Dorsolateral prefrontal cortex (tissue), 120 donors: ENCODE measurements at regions of chr15 and their contacts with region 1.

Region 1: DNA sequence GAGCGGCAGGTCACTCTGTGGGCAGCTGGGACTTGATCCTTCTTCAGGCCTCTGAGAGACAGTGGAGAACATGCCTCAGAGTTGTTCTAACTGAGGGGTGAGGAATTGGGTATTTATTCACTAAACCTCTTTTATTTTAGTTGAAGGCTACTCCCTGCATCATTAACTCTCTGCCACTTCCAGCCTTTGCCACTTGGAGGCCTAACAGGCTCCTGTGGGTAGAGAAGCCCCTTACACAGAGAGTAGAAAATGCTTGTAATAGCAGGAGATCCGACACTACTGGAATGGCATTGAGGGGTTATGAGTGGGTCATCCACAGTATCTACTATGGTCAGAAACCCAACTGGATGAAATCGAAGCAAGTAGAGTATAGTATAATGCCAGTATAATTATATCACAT is 81.7 kb downstream of the RYR3 start:
- DNase-seq: no peak
- H3K4me3 ChIP-seq: no peak overlapping the region
- H3K27ac ChIP-seq: no peak overlapping the region
- H3K27me3 ChIP-seq: no peaks in the 10 kb centered on the region
- CTCF ChIP-seq: no peak

Region 2: DNA sequence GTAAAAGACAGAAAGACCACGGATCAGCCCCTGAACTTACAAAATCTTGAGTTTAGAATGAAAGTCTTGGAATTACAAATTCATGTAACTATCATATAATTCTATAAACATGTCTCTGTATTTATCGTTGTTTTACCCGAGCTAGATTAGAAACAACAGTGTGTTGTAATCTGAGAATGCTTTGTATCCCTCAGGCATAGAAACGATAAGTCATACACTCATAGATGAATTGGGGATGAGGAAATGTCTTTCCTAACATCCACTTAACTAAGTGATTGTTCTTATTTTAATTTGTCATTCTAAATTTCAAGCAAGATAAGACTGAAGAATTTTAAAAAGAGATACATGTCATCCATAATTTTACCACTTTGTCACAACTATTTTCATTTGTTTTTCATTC is 83.6 kb after region 1 on chr15:
- intact Hi-C with region 1: loop called in 1 of 2 experiments (anchors 10 kb)
- DNase-seq: no peak
- H3K4me3 ChIP-seq: no peak overlapping the region
- H3K27ac ChIP-seq: no peak overlapping the region
- H3K27me3 ChIP-seq: no peaks in the 10 kb centered on the region
- CTCF ChIP-seq: no peak

Region 3: GRCh38 chr15:34358367-34358766 is 965.9 kb after region 1 on chr15:
- intact Hi-C with region 1: no loop called
- DNase-seq: no peak
- H3K4me3 ChIP-seq: no peak overlapping the region
- H3K27ac ChIP-seq: no peak overlapping the region
- H3K27me3 ChIP-seq: no peaks in the 10 kb centered on the region
- CTCF ChIP-seq: peak in 5 of 56 donors; percentile 8 to 14 (median 10)